T-cell (primary cell): ENCODE measurements at regions of chr6 and their contacts with region 1.

Region 1: GRCh38 chr6:96923871-96924493 is 546 bp upstream of the KLHL32 start:
- DNase-seq: peak in 5 of 35 experiments; percentile 0 to 69 (median 4)
- ATAC-seq: peak in 1 of 4 experiments; percentile 70
- H3K4me3 ChIP-seq: peak overlapping the region; percentile 44 to 66
- H3K4me3 Mint-ChIP-seq: peak overlapping the region; percentile 91 to 96 (median 94)
- H3K27ac ChIP-seq: peak overlapping the region; percentile 98
- H3K27ac Mint-ChIP-seq: peak overlapping the region; percentile 96 to 97
- H3K4me1 ChIP-seq: peaks cover 4 to 11% of the 10 kb centered on the region in 2 experiments
- H3K4me1 Mint-ChIP-seq: peaks cover 36 to 44% (median 43%) of the 10 kb centered on the region in 3 donors
- H3K27me3 ChIP-seq: no peaks in the 10 kb centered on the region
- H3K27me3 Mint-ChIP-seq: peaks cover 0 to 2% of the 10 kb centered on the region in 2 donors

Region 2: DNA sequence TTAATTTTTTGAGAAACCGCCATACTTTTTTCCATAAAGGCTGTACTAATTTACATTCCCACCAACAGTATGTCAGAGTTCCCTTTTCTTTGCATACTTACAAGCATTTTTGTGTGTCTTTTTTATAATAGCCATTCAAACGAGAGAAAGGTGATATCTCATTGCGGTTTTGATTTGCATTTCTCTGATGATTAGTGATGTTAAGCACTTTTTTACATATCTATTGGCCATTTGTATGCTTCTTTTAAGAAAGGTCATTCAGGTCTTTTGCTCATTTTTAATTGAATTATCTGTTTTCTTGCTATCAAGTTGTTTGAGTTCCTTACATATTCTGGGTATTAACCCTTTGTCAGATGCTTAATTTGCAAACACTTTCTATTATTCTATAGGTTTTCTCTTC is 578.5 kb before region 1 on chr6:
- CTCF ChIA-PET with region 1: no interaction called
- POLR2A ChIA-PET with region 1: no interaction called
- DNase-seq: no peak
- ATAC-seq: no peak
- H3K4me3 ChIP-seq: no peak overlapping the region
- H3K4me3 Mint-ChIP-seq: no peak overlapping the region
- H3K27ac ChIP-seq: no peak overlapping the region
- H3K27ac Mint-ChIP-seq: no peak overlapping the region
- H3K4me1 ChIP-seq: no peaks in the 10 kb centered on the region
- H3K4me1 Mint-ChIP-seq: no peaks in the 10 kb centered on the region
- H3K27me3 ChIP-seq: peaks cover 0 to 7% of the 10 kb centered on the region in 2 experiments
- H3K27me3 Mint-ChIP-seq: peaks cover 2 to 17% of the 10 kb centered on the region in 2 donors

Region 3: GRCh38 chr6:96897383-96898240 is 26.4 kb before region 1 on chr6 and contains the start of gene NDUFAF4:
- CTCF ChIA-PET with region 1: interaction called, 15 to 25 read pairs
- POLR2A ChIA-PET with region 1: interaction called in 1 of 2 experiments, 16 read pairs
- DNase-seq: peak; percentile 84 to 96 (median 92)
- ATAC-seq: peak; percentile 90 to 96 (median 94)
- H3K4me3 ChIP-seq: peak within 1 kb of the TSS; percentile 91 to 96
- H3K4me3 Mint-ChIP-seq: peak within 1 kb of the TSS; percentile 77 to 98 (median 96)
- H3K27ac ChIP-seq: peak within 1 kb of the TSS; percentile 85
- H3K27ac Mint-ChIP-seq: peak within 1 kb of the TSS; percentile 90 to 92
- H3K4me1 ChIP-seq: peaks cover 6 to 24% of the 10 kb centered on the region in 2 experiments
- H3K4me1 Mint-ChIP-seq: peaks cover 30 to 35% (median 33%) of the 10 kb centered on the region in 3 donors
- H3K27me3 ChIP-seq: peaks cover 0 to 2% of the 10 kb centered on the region in 2 experiments
- H3K27me3 Mint-ChIP-seq: peaks cover 11 to 13% of the 10 kb centered on the region in 2 donors
- total RNA-seq, gene NDUFAF4: 22.1 to 29.0 (median 24.5) TPM